Astrocyte of the cerebellum (primary cell): ENCODE measurements at regions of chr17 and their contacts with region 1.

Region 1: DNA sequence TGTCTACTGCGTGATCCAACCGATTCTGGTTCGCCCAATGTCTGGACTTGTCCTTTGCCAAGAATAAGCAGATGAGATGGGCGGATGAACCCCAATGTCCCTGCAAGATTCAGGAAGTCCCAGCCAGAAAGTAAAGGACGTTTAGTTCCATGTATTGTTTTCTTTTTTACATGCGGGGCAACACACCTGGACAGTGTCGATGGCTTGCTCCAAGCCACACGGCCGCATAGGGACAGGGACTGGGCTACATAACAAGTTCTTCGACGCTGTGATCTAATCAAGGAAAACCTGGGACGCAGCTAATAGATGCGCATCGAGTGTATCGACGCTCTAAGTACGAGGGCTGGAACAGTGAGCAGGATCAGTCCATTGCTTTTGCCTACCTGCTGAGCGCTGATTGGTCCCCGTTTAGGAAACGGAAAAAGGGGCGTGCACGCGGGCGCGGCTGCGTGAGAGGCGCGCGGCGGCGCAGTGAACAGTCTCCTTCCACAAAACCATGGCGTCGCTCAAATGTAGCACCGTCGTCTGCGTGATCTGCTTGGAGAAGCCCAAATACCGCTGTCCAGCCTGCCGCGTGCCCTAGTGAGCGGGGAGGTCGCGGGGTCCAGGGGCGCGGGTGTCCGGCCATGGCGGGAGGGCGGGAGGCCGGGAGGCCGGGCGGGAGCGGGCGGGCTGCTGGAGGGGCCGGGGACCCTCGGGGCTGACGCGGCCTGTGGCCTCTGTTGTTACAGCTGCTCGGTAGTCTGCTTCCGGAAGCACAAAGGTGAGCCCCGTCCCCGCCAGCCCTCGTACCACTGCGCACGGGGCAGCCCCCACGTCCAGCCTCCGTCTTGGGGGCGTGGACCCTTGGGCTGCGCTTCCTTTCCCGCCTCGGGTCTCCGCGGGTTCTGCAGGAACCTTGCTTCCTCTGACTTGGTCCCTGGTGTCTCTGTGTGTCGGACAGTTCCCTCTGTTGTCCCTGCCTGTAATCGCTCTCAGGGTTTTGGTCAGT is at the start of gene ZNHIT3:
- DNase-seq: peak; percentile 84
- H3K4me3 ChIP-seq: peak within 1 kb of the TSS; percentile 92
- CTCF ChIP-seq: no peak

Region 2: GRCh38 chr17:35981908-35982330 is 504.6 kb before region 1 on chr17:
- in situ Hi-C with region 1: loop called (anchors 25 kb)
- DNase-seq: no peak
- H3K4me3 ChIP-seq: no peak overlapping the region
- CTCF ChIP-seq: no peak

Region 3: GRCh38 chr17:36089888-36090836 is 396.3 kb before region 1 on chr17 and contains the start of gene CCL3:
- in situ Hi-C with region 1: loop called (anchors 25 kb)
- DNase-seq: no peak
- H3K4me3 ChIP-seq: no peak within 1 kb of the TSS
- CTCF ChIP-seq: no peak

Region 4: DNA sequence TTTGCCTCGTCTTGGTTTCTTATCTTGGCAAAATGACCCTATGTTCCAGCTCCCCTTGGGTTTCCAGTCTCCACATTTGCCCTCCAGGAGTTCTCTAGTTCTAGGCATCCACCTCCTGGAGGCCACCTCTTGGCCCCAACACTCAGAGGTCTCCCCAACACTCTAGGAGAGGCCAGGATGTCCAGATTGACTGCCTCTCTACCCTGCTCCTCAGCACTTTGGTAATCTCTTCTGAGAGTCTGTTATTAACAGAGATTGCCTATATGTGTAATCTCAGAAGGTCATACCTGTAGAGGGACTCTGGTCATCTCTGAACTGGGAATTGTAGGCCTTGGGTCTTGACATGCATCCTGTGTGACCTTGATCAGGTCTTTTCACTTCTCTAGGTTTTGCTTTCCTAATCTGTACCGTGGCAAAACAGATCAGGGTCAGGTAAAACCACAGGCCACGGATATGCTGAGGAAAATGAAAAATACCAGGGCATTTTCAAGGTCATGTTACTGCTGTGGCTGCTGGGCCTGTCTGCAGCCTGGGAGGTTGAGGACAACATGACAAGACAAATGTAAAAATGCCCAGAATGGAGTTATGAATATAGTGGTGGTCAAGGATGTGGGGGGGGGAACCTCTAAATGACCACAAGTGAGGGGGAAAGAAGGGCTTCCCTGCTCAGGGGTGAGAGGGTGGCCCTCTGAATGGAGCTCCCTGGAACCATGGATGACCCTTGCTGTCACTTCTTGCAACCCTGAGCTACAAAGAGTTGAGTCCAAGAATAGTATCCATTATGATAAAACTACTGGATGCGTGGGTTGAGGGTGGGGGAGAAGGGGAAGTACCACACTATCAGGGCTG is 280.6 kb before region 1 on chr17:
- in situ Hi-C with region 1: loop called (anchors 25 kb)
- DNase-seq: no peak
- H3K4me3 ChIP-seq: no peak overlapping the region
- CTCF ChIP-seq: no peak

Region 5: DNA sequence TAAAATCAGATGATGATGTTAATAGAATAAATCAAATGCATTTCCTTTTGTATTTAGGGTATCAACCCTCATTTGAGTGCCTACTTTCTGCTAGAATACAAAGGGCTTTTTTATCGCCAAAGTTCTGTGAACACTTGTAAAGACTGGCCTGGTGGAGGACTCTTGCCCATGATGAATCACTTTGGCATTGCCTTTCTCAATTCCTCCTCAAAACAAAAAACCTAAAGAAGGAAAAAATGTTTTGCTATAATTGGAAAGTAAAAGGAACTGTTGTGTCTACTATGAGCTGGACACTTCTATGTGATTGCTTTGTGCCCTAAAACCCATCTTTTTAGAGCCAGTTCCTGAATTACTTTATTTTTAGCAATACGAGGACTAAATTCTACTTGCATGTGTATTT is 92.2 kb after region 1 on chr17:
- in situ Hi-C with region 1: no loop called
- DNase-seq: no peak
- H3K4me3 ChIP-seq: no peak overlapping the region
- CTCF ChIP-seq: no peak